Cardiac septum (tissue), 1 donor: ENCODE measurements at regions of chr19 and their contacts with region 1.

Region 1: DNA sequence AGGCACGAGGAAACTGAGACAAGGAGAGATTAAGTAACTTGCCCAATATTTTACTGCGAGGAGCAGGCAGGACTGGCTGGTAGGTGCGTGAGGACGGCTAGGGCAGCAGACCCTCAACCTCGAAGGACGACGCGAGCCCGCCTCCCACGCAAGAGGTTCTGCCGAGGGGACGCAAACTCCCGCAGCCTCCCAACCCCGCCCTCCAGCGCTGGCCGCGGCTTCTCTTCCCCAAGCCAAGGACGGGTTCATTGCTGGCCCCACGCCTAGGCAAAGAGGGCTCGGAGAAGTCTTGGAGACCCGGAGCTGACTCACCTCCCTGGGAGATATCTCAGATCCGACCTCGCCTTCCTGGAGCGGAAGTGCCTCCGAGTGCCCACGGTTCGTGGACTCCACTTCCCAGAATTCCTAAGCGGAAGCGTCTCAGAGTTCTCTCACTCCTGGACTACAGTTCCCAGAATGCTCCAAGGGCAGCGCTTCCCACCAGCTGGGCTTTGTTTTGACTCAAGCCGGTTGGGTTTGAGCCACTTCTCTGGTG is at the start of gene ZNF235:
- DNase-seq: peak; percentile 95
- total RNA-seq, gene ZNF235: 5.2 TPM

Region 2: DNA sequence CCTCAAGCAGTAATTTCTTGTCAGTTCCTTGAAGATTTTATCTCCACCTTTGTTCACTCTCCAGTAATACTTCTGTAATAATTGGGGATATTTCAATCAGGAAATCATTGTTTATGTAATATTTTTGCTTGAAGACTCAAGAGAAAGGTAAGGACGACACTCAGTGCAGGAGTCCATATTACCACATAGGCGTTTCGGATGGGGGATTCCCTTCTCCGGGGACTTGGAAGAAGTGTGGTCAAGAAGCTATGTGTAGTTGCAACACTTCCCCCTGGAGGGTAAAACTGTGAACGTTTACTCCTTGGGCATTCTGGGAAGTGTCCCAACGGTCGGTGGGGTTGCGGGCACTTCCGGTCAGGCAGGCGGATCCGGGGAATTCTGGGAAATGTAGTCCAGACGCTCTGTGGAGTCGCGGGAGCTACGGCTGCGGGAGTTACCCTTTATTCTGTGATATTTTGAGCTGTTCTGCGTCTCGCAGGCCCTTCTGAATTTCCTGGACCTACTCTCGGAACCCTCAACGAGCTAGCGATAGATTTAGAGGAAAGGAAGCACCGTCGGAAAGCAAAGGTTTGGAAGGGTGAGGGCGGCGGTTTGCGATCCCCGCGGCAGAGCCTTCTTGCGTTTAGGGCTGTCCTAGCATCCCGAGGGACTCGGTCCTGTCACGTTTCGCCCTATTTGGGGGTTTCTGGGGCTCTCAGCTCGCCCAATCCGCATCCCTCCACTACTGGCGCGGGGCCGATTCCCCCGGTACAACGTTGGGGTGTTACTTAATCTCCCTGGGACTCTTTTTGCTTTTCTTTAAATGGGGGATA is 353.7 kb before region 1 on chr19 and contains the start of gene ZNF221:
- intact Hi-C with region 1: no loop called
- DNase-seq: peak; percentile 92
- total RNA-seq, gene ZNF221: 4.7 TPM

Region 3: DNA sequence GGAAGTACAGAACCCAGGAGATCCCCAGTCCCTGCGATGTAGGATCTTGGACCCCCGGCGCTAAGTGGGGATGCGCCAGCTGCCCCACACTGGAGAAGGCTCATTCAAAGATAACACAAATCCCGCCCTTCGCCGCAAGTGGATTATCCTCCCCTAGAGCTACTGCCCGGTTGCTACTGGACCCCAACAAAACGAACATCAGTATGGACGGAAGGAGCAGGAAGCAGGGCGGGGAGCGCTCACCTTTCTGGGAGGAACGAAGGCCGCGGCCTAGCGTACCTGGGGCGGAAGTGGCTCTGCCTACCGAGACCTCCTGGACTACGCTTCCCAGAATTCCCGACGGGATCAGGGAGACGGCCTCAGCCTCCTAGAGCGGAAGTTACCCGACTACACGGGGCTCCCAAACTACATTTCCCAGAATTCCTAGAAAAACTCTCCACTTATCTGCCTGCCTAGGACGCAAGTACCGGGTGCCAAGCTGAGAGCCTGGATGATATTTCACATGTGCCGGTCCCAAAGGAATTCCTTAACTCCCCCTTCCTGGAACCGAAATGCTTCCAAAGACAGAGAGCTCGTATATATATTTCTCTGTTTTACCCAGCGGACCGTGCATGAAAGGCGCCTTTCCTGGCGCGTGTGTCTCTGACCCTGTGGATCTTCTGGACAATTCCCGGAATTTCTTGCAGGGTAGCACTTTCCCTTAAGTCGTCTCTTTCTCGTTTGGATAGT is 51.8 kb after region 1 on chr19 and contains the start of gene ZNF112:
- intact Hi-C with region 1: loop called (anchors 2 kb)
- DNase-seq: peak; percentile 90
- total RNA-seq, gene ZNF112: 3.8 TPM

Region 4: DNA sequence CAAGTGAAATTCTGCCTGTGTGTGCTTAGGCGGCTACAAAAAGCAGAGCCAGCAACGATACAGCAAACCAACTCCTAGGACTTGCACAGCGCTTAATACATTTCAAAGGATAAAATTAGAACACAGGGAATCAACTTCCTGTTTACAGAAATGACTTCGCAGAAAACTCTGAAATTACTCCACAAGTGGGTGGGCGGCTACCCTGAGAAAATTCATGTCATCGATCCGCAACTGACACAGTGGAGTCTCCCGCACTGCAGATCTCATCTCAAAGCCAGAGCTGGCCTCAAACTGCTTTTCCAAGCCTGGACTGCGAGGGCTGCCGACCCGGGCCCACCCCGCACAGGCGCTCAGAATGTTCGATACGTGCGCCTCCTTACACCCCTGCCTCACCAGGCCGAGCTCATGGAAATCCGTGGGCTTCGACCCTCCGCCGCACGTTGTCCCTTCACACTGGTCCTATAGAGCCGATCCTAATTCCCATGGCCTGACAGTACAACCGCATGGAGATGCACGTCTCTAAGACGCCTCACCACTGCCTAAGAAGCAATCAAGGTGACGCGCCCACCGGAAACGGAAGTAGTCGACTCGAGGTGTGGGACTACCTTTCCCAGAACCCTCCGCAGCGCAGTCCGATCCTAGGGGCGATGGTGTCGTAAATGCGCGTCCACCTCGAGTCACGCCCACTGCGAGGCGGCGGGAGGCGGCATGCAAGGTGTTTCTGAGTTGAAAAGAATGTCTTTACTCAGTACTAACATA is 143.4 kb after region 1 on chr19 and contains the start of gene ZNF229:
- intact Hi-C with region 1: loop called (anchors 5 kb)
- DNase-seq: peak; percentile 94
- total RNA-seq, gene ZNF229: 7.1 TPM